ENCODE measurements at regions of chr11 and their contacts with region 1.

Region 1: DNA sequence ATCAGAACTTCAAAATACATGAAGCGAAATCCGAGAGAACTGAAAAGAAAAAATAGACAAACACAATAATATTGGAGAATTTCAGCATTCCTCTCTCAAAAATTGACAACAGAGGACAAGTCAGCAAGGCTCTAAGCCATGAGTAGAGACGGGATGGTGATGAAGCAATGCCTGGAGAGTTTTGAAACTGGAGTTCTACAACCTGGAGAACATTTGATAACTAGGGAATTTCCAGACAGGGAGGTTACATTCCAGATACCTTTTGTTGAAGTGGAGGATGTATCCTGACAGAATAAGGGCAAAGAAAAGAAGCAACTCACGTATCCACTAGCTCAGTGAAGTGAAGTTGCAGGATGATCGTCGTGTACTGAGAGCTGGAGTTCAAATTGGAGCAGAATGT is 291.4 kb downstream of the CTTN start:
- DNase-seq: no peak
- H3K4me3 ChIP-seq: no peak overlapping the region
- H3K27ac ChIP-seq: no peak overlapping the region
- H3K27me3 ChIP-seq: no peaks in the 10 kb centered on the region
- CTCF ChIP-seq: no peak

Region 2: DNA sequence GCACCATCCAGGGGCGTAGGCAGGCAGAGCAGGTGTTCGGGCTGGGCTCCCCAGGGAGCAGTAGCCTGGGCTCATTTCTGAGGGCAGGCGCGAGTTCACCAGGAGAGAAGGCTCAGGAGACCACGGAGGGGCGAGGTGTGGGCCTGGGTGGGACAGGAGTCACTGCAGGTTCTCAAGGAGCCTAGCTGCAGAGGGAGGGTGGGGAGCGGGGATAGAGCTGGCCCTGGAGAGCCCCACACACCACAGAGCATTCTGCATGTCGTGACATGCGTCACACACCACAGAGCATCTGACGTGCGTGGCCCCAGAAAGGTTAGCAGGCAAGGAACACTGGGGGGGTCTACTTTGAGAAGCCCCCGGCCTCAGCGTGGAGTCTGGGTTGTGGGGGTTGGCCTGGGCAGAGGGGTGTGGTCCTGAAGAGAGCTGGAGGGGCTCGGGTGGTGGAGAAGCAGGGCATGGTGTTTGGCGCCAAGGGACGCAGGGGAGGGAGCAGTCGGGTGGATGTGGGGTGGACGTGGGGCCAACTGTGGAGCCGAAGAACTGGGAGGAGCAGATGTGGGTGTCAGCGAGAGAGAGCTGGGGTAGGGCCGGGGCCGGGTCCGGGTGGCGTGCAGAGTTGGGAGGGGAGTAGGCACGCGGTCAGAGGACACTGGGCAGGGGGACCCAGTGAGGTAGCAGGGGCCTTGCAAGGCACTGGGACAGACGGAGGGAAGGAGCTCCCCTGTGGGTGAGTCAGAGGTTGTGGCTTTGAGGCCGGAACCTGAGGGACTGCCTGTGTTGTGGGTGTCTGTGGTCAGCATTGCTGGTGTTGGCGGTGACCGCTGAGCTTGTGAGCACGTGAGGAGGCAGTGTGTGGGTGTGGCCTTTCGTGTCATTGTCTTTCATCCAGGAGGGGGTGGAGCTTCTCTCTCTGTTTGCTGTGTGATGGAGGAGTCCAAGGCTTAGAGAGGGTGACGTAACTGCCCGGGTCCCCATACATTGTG is 265.9 kb before region 1 on chr11:
- CTCF ChIA-PET with region 1: no interaction called
- POLR2A ChIA-PET with region 1: interaction called, 13 read pairs
- DNase-seq: peak; percentile 49
- H3K4me3 ChIP-seq: no peak overlapping the region
- H3K27ac ChIP-seq: peak overlapping the region; percentile 21
- H3K27me3 ChIP-seq: no peaks in the 10 kb centered on the region
- CTCF ChIP-seq: no peak

Region 3: DNA sequence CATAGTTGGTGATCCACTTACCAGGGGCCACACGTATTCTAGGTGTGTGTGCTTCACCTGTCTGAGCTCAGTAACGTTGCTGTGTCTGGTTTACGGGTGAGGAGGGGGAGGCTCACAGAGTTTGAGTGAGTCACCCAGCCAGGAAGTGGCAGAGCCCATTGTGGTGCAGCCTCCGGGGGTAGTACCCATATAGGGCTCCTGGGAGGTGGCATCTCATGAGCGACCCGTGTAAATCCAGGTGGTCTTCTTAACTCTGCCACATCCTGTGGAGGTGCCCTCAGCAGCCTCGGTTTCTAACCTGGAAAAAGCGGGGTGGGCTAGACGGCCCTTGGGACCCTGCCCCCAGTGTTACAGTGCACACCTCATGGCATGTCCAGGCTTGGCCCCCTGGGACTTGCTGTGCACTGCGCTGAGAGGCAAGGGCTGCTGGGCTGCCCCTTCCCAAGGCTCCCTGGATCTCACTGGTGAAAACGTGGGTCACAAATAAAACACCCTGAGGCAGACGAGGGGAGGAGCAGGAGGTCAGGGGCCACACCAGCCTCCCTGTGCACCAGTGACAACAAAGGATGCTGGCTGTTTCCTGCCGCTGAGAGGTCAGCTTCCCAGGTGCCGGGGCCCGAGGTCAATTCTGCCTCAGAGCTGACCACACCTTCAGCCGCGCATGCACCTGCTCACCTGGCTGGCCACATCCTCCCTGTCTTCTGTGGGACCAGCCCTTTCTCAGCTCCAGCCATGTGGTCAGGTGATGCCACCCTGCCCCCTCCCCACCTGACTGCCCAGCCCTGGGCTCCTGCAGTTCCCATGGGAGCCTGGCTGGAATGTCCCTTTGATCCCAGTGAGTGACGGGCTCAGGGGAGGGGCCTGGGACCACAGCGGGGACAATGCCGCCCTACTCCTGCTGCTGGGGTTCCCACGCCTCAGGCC is 13.6 kb after region 1 on chr11:
- CTCF ChIA-PET with region 1: no interaction called
- POLR2A ChIA-PET with region 1: no interaction called
- DNase-seq: no peak
- H3K4me3 ChIP-seq: no peak overlapping the region
- H3K27ac ChIP-seq: no peak overlapping the region
- H3K27me3 ChIP-seq: no peaks in the 10 kb centered on the region
- CTCF ChIP-seq: no peak